MCF 10A (cell line): ENCODE measurements at regions of chr1 and their contacts with region 1.

Region 1: DNA sequence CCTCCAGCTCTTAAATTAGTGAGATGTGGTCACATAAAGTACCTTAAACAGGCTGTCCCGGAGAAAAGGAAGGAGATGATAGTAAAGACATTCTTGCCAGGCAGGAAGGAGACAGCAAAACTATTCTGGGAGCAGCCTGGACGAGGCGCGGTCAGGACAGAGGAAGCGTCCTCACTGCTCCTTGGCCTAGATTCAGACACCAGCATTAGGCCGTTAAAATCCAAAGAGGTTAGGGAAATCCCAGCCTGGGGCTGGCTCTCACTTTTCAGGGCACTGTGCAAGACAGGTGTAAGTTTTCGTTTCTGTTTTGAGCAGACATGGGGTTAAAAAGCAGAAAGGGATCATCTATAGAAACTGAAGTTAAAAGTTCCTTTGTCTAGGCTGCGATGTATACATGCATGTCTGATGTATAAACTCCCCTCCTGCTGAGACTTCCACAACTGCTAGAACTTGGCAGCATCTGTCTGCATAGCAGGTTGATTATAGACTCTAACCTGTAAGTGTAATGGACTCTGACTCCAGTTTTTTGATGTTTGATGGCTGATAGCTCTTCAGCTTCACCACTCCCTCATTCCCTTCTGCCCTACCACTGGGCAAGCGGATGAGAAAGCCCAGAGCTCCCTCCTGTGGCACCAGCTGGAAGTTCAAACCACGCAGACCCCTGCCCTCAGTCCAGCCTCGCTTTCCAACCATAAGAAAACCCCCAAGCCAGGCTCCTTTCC is 21.5 kb downstream of the STPG1 start:
- DNase-seq: peak; percentile 71
- H3K4me3 Mint-ChIP-seq: peak overlapping the region; percentile 64
- H3K27ac Mint-ChIP-seq: peak overlapping the region; percentile 97
- H3K4me1 Mint-ChIP-seq: peaks cover 55% of the 10 kb centered on the region
- H3K27me3 Mint-ChIP-seq: no peaks in the 10 kb centered on the region
- CTCF ChIP-seq: peak; percentile 87

Region 2: GRCh38 chr1:24150234-24151174 is 241.5 kb before region 1 on chr1:
- CTCF ChIA-PET with region 1: interaction called, 47 read pairs
- POLR2A ChIA-PET with region 1: interaction called, 22 read pairs
- intact Hi-C with region 1: loop called (anchors 1 kb)
- DNase-seq: peak; percentile 90
- H3K4me3 Mint-ChIP-seq: peak overlapping the region; percentile 58
- H3K27ac Mint-ChIP-seq: peak overlapping the region; percentile 3
- H3K4me1 Mint-ChIP-seq: peaks cover 20% of the 10 kb centered on the region
- H3K27me3 Mint-ChIP-seq: no peaks in the 10 kb centered on the region
- CTCF ChIP-seq: peak; percentile 81

Region 3: GRCh38 chr1:24321697-24322469 is 70.2 kb before region 1 on chr1:
- CTCF ChIA-PET with region 1: interaction called, 77 read pairs
- POLR2A ChIA-PET with region 1: interaction called, 31 read pairs
- intact Hi-C with region 1: loop called (anchors 1 kb)
- DNase-seq: peak; percentile 95
- H3K4me3 Mint-ChIP-seq: peak overlapping the region; percentile 74
- H3K27ac Mint-ChIP-seq: peak overlapping the region; percentile 87
- H3K4me1 Mint-ChIP-seq: peaks cover 64% of the 10 kb centered on the region
- H3K27me3 Mint-ChIP-seq: no peaks in the 10 kb centered on the region
- CTCF ChIP-seq: no peak

Region 4: DNA sequence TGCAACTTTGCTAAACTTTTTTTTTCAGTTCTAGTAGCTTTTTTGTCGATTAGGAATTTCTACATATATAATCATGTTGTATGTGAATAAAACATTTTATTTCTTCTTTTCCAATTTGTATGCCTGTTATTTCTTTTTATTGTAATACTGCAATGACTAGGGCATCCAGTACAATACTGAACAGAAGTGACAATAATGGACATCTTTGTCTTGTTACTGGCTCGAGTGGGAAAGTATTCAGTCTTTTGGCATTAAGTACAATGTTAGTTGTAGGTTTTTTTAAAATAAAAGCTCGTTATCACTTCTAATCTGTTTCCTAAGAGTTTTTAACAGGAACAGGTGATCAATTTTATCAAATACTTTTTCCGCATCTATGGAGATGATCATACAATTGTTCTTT is 11.8 kb after region 1 on chr1:
- CTCF ChIA-PET with region 1: interaction called, 57 read pairs
- POLR2A ChIA-PET with region 1: interaction called, 86 read pairs
- intact Hi-C with region 1: no loop called
- DNase-seq: no peak
- H3K4me3 Mint-ChIP-seq: no peak overlapping the region
- H3K27ac Mint-ChIP-seq: no peak overlapping the region
- H3K4me1 Mint-ChIP-seq: no peaks in the 10 kb centered on the region
- H3K27me3 Mint-ChIP-seq: no peaks in the 10 kb centered on the region
- CTCF ChIP-seq: no peak

Region 5: DNA sequence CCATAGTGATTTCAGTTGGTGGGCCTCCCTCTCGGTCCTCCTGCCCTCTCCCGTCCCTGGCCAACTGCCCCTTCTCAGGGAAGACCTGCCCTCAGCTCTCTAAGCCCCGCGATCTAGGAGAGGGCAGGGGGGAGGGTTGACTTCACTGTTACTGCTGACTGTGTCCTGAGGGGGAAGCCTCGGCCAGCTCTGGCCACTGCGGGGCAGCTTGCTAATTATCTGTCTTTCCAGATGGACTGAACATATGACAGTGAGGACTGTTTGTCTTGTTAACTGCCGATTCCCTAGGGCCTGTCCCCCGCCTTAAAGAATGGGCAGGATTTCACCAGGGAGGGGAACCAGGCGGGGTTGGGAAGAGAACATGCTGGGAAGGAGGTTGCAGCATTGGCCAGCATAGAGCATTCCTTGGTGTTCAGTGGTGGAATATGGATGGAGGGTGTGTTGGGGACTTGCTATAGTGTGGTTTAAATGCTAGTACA is 46.4 kb after region 1 on chr1:
- CTCF ChIA-PET with region 1: no interaction called
- POLR2A ChIA-PET with region 1: no interaction called
- intact Hi-C with region 1: no loop called
- DNase-seq: no peak
- H3K4me3 Mint-ChIP-seq: no peak overlapping the region
- H3K27ac Mint-ChIP-seq: peak overlapping the region; percentile 65
- H3K4me1 Mint-ChIP-seq: peaks cover 5% of the 10 kb centered on the region
- H3K27me3 Mint-ChIP-seq: no peaks in the 10 kb centered on the region
- CTCF ChIP-seq: no peak

Region 6: DNA sequence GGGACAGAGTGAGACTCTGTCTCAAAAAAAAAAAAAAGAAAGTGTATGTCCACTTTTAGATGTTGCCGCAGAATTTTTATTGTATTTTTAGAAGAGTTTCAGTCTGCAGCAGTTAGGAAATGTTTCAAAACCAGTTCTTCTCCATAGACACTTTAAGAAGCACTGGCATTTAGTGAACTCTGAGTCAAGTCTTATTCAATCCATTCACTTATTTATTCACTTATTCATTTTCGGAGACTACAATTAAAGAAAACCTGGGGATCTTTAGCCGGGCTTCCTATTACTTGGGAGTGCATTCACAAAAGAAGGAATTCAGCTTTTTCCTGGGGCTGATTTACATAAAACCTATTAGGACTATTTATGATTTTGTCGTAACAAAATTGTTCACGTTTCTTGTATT is 122.9 kb after region 1 on chr1:
- CTCF ChIA-PET with region 1: no interaction called
- POLR2A ChIA-PET with region 1: no interaction called
- intact Hi-C with region 1: no loop called
- DNase-seq: no peak
- H3K4me3 Mint-ChIP-seq: no peak overlapping the region
- H3K27ac Mint-ChIP-seq: peak overlapping the region; percentile 57
- H3K4me1 Mint-ChIP-seq: peaks cover 15% of the 10 kb centered on the region
- H3K27me3 Mint-ChIP-seq: no peaks in the 10 kb centered on the region
- CTCF ChIP-seq: no peak

Region 7: DNA sequence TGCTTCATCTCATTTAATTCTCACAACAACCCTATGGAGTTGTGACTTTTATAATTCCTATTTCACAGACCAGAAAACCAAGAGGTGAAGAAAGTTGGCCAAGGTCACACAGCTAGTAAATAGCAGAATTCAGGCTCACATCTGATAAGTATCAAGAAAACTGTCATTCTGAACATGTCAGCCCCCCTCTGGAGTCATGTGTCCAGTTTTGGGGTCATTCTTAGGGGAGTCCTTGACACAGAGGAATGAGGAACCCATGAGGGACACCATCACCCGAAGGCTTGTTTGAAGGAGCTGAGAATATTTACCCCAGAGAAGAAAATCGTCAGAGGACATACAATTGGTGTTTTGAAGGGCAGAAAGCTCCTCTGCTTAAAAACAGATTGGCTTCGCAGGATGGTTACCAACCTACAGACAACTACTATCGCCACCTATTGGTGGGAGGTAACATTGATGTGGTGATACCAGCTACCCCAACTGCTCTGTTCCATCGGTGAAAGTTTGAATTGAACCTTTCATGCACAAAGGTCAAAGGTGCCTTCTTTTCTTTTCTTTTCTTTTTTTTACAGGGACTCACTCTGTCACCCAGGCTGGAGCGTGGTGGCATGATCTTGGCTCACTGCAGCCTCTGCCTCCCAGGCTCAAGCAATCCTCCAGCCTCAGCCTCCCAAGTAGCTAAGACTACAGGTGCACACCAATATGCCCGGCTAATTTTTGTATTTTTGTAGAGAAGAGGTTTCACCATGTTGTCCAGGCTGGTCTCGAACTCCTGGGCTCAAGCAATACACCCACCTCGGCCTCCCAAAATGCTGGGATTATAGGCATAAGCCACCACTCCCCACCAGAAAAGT is 195.2 kb after region 1 on chr1:
- CTCF ChIA-PET with region 1: interaction called, 5 read pairs
- POLR2A ChIA-PET with region 1: no interaction called
- intact Hi-C with region 1: loop called (anchors 2 kb)
- DNase-seq: peak; percentile 72
- H3K4me3 Mint-ChIP-seq: no peak overlapping the region
- H3K27ac Mint-ChIP-seq: no peak overlapping the region
- H3K4me1 Mint-ChIP-seq: peaks cover 9% of the 10 kb centered on the region
- H3K27me3 Mint-ChIP-seq: no peaks in the 10 kb centered on the region
- CTCF ChIP-seq: peak; percentile 70